Panc1 (cell line): ENCODE measurements at regions of chr1 and their contacts with region 1.

Region 1: GRCh38 chr1:6180212-6180575 is at the start of gene CHD5:
- DNase-seq: no peak
- ATAC-seq: peak; percentile 64
- H3K4me3 ChIP-seq: peak within 1 kb of the TSS; percentile 56 to 59
- H3K27ac ChIP-seq: peak within 1 kb of the TSS; percentile 85
- H3K4me1 ChIP-seq: peaks cover 60% of the 10 kb centered on the region
- H3K27me3 ChIP-seq: no peaks in the 10 kb centered on the region
- CTCF ChIP-seq: peak; percentile 72
- total RNA-seq, gene CHD5: 62.9 TPM

Region 2: GRCh38 chr1:5707566-5708340 is 472.4 kb before region 1 on chr1:
- CTCF ChIA-PET with region 1: no interaction called
- POLR2A ChIA-PET with region 1: no interaction called
- in situ Hi-C with region 1: no loop called
- intact Hi-C with region 1: no loop called
- DNase-seq: no peak
- ATAC-seq: no peak
- H3K4me3 ChIP-seq: no peak overlapping the region
- H3K27ac ChIP-seq: no peak overlapping the region
- H3K4me1 ChIP-seq: no peaks in the 10 kb centered on the region
- H3K27me3 ChIP-seq: no peaks in the 10 kb centered on the region; the same call in 1 of the 2 replicates
- CTCF ChIP-seq: no peak

Region 3: DNA sequence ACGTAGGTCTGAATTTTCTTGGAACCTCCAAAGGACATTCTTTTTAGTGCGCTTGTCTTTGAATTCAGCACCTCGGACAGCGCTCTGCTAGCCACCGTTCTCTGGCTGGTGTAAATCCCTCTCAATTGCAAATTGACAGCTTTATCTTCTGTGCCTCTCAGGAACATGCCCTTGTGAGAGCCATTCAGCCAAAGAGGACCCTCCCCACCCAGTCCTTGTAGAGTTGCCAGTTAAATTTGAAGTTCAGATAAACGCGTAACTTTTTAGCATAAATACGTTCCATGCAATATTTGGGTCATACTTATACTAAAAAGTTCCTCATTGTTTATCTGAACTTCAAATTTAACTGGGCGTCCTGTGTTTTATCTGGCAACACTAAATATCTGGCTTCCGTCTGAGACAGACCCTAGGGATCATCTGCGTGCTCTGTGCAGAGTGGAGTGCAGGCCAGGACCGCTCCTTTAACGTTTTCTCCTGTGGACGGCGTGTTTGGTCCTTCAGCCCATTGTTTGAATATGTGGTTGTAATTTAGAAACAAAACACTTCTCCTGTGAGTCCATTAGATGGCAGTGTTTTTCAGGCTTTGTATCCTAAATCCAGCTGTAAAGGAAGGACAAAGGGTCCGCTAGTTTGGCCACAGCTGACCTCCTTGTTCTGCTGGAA is 127.5 kb before region 1 on chr1:
- CTCF ChIA-PET with region 1: no interaction called
- POLR2A ChIA-PET with region 1: no interaction called
- in situ Hi-C with region 1: no loop called
- intact Hi-C with region 1: loop called (anchors 5 kb)
- DNase-seq: peak; percentile 18
- ATAC-seq: peak; percentile 68
- H3K4me3 ChIP-seq: no peak overlapping the region
- H3K27ac ChIP-seq: no peak overlapping the region
- H3K4me1 ChIP-seq: no peaks in the 10 kb centered on the region
- H3K27me3 ChIP-seq: no peaks in the 10 kb centered on the region
- CTCF ChIP-seq: peak; percentile 82

Region 4: GRCh38 chr1:6108937-6109614 is 71.1 kb before region 1 on chr1:
- CTCF ChIA-PET with region 1: interaction called, 3 read pairs
- POLR2A ChIA-PET with region 1: no interaction called
- in situ Hi-C with region 1: no loop called
- intact Hi-C with region 1: loop called (anchors 5 kb)
- DNase-seq: no peak
- ATAC-seq: peak; percentile 92
- H3K4me3 ChIP-seq: no peak overlapping the region
- H3K27ac ChIP-seq: no peak overlapping the region
- H3K4me1 ChIP-seq: peaks cover 5% of the 10 kb centered on the region; the same call in 1 of the 2 replicates
- H3K27me3 ChIP-seq: no peaks in the 10 kb centered on the region
- CTCF ChIP-seq: peak; percentile 86